ENCODE measurements at regions of chr20 and their contacts with region 1.

Region 1: DNA sequence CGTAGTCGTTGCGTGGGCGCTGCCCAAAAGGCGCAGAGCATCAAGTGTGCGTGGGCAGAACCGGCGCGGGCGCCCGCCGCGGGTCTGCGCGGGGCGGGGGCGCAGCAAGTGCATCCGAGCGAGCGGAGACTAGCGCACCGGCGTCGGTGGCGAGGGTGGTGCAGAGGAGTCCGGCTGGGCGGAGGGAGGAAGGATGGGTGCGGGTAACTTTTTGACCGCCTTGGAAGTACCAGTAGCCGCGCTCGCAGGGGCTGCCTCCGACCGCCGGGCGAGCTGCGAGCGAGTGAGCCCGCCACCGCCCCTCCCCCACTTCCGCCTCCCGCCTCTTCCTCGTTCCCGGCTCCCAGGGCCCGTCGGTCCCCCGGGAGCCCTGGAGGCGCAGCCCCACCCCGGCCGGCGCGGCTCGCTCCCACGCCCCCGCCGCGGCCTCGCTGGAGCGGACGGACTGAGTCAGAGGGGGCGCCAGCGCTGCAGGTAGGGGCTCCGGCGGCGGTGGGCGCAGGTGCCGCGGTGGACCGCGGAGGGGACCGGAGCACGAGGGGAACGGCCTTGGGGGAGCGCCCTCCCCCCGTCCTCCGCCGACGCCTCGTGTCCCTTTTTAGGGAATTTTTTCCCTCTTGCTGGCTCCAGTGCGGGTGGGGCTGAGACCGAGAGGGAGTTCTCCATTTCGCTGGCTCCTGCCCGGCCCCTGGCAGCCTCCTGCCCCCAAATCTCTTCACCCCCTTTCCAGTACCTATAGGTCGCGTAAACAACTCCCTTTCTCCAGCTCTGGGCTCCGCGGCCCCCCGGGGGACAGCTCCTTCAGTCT is 1.6 kb upstream of the DBNDD2 start:
- DNase-seq: peak in 41 of 42 donors; percentile 42 to 92 (median 80)

Region 2: GRCh38 chr20:45436732-45437391 is 30.4 kb after region 1 on chr20:
- intact Hi-C with region 1: loop called (anchors 2 kb)
- DNase-seq: peak; percentile 82 to 98 (median 94)

Region 3: DNA sequence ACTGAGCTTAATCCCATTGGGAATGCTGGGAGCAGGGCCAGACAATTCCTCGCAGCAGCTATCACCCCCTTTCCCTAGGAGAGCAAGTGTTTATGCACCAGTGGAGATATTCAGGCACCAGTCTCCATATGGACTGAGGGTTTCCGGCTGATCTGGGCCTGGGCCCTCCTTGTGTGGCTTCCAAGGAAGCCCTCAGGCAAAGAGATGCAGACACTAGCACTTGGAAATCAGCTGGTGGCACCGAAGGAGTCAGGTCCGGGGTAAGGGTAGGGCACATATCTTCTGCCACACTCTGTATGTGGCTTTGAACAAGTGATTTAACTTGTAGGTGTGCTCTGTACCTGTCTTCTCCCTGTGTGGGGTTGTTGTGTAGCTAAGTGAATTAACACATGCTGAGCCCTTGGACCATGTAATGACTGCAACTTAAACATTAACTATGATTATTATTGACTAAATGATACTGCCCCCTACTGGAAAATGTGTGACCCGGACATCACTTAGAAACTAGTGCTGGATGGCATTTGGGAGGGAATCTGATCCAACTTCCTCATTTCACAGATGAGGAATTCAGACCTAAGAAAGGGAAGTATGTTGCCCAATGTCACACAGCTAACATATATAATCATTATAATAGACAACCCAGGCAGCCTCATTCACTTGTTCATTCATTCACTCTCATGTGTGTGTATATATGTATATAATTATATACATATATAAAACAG is 43.8 kb after region 1 on chr20:
- intact Hi-C with region 1: no loop called
- DNase-seq: peak in 9 of 42 donors; percentile 16 to 68 (median 34)

Region 4: GRCh38 chr20:45701104-45701503 is 294.6 kb after region 1 on chr20:
- intact Hi-C with region 1: no loop called
- DNase-seq: no peak

Measured in head of caudate nucleus (tissue), 42 donors.